PC-9 (cell line): ENCODE measurements at regions of chr9 and their contacts with region 1.

Region 1: GRCh38 chr9:88991066-88992034 is at the start of gene S1PR3:
- DNase-seq: peak in 1 of 2 experiments; percentile 76
- H3K4me3 ChIP-seq: peak within 1 kb of the TSS; percentile 86
- H3K27ac ChIP-seq: no peak within 1 kb of the TSS
- H3K4me1 ChIP-seq: peaks cover 28% of the 10 kb centered on the region
- H3K27me3 ChIP-seq: no peaks in the 10 kb centered on the region
- CTCF ChIP-seq: no peak; the same call in 1 of the 2 replicates
- total RNA-seq, gene S1PR3: 19.4 and 23.3 TPM in 2 replicates

Region 2: DNA sequence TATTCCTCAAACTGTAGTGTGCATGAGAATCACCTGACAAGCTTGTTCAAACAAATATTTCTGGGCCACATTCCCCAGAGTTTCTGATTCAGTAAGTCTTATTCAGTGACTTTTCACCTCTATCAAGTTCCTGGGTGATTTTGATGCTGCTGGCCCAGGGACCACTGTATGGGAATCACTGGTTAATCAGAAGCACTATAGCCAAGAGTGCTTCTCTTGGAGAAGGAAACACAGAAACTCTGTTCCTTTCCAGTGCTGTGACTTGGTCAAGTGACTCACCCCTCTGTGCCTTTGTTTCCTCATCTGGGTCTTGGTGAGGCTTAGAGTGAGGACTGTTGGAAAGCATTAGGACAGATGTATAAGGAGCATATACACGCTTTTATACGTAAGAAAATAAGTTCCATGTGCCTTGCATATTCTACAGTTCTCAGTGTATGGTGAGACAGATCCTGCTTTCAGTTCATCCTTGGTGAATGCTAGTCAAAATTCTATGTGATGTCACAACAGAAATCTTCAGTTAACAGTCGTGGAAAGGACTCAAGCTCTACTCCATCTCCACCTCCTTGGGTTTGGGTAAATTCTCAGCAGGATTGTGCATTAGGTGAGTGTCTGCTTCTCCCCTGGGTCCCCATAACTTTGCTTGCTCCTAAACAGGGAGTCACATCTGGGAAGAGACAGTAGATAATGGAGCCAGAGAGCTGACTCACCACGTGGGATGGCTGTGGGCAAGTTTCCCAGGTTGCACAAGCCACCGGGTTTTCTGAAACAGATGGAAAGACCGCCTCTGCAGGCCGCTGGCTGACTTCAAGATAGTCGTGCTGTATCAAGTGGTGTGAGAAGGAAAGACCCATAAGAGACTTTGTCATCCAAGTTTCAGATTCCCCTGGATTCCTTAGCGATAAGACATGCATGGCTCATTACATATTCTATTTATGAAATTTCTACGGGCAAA is 339.4 kb before region 1 on chr9:
- CTCF ChIA-PET with region 1: no interaction called
- POLR2A ChIA-PET with region 1: no interaction called
- intact Hi-C with region 1: loop called (anchors 5 kb)
- DNase-seq: peak in 1 of 2 experiments; percentile 83
- H3K4me3 ChIP-seq: no peak overlapping the region
- H3K27ac ChIP-seq: no peak overlapping the region
- H3K4me1 ChIP-seq: no peaks in the 10 kb centered on the region
- H3K27me3 ChIP-seq: no peaks in the 10 kb centered on the region
- CTCF ChIP-seq: no peak

Region 3: DNA sequence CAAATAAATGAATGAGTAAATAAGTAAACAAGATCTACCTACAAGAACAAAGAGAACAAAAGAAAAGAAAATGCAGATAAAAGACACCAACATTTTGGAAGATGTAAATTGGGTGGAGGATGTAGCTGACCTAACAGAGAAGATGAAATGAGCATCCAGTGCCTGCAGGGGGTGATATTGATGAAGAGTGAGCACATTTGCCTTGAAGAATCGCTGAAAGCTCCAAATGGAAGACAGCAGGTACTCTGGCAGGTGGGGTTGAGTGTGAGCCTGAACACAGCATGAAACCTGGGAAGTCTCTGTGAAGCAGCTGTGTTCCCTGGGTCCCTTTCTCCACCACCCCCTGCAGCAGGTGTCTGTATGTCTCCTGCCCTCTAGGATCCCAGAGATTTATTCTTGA is 330.7 kb before region 1 on chr9:
- CTCF ChIA-PET with region 1: interaction called, 22 read pairs
- POLR2A ChIA-PET with region 1: no interaction called
- intact Hi-C with region 1: no loop called
- DNase-seq: peak in 1 of 2 experiments; percentile 4
- H3K4me3 ChIP-seq: no peak overlapping the region
- H3K27ac ChIP-seq: no peak overlapping the region
- H3K4me1 ChIP-seq: no peaks in the 10 kb centered on the region
- H3K27me3 ChIP-seq: no peaks in the 10 kb centered on the region
- CTCF ChIP-seq: peak; percentile 55

Region 4: GRCh38 chr9:88880205-88880604 is 111.1 kb before region 1 on chr9:
- CTCF ChIA-PET with region 1: no interaction called
- POLR2A ChIA-PET with region 1: interaction called, 7 read pairs
- intact Hi-C with region 1: loop called (anchors 1 kb)
- DNase-seq: peak; percentile 77 to 85
- H3K4me3 ChIP-seq: no peak overlapping the region
- H3K27ac ChIP-seq: no peak overlapping the region
- H3K4me1 ChIP-seq: peaks cover 6% of the 10 kb centered on the region; the same call in 1 of the 2 replicates
- H3K27me3 ChIP-seq: no peaks in the 10 kb centered on the region
- CTCF ChIP-seq: no peak

Region 5: GRCh38 chr9:88891040-88891439 is 100.3 kb before region 1 on chr9:
- CTCF ChIA-PET with region 1: no interaction called
- POLR2A ChIA-PET with region 1: no interaction called
- intact Hi-C with region 1: no loop called
- DNase-seq: no peak
- H3K4me3 ChIP-seq: no peak overlapping the region
- H3K27ac ChIP-seq: no peak overlapping the region
- H3K4me1 ChIP-seq: peaks cover 17% of the 10 kb centered on the region
- H3K27me3 ChIP-seq: no peaks in the 10 kb centered on the region
- CTCF ChIP-seq: no peak

Region 6: GRCh38 chr9:88942411-88942810 is 48.9 kb before region 1 on chr9:
- CTCF ChIA-PET with region 1: no interaction called
- POLR2A ChIA-PET with region 1: no interaction called
- intact Hi-C with region 1: loop called (anchors 5 kb)
- DNase-seq: peak in 1 of 2 experiments; percentile 72
- H3K4me3 ChIP-seq: no peak overlapping the region
- H3K27ac ChIP-seq: peak overlapping the region; percentile 72
- H3K4me1 ChIP-seq: peaks cover 77% of the 10 kb centered on the region
- H3K27me3 ChIP-seq: no peaks in the 10 kb centered on the region
- CTCF ChIP-seq: no peak

Region 7: GRCh38 chr9:89021154-89021803 is 29.9 kb after region 1 on chr9:
- CTCF ChIA-PET with region 1: no interaction called
- POLR2A ChIA-PET with region 1: no interaction called
- intact Hi-C with region 1: no loop called
- DNase-seq: peak; percentile 82 to 85
- H3K4me3 ChIP-seq: peak overlapping the region; percentile 12; the same call in 1 of the 2 replicates
- H3K27ac ChIP-seq: peak overlapping the region; percentile 70
- H3K4me1 ChIP-seq: peaks cover 42% of the 10 kb centered on the region
- H3K27me3 ChIP-seq: no peaks in the 10 kb centered on the region
- CTCF ChIP-seq: no peak

Region 8: DNA sequence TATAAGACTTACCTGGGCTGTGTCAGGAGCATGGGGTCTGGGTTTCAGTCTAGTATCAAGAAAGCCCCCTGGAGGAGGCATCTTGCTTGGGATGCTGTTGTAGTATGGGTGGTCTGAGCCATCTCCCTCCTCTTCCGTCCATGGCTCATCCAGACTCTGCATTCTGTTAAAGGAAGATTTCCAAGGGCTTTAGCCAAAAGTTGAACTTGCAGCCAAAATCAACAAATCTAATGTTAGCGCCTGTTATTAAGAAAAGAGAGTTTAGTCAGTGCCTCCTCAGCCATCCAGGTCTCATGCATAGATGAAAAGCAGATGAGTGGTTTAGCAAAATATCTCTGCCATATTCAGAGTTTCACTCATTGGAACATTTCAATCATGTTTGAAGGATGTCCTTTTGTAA is 55.5 kb after region 1 on chr9:
- CTCF ChIA-PET with region 1: no interaction called
- POLR2A ChIA-PET with region 1: no interaction called
- intact Hi-C with region 1: no loop called
- DNase-seq: no peak
- H3K4me3 ChIP-seq: no peak overlapping the region
- H3K27ac ChIP-seq: no peak overlapping the region
- H3K4me1 ChIP-seq: no peaks in the 10 kb centered on the region
- H3K27me3 ChIP-seq: no peaks in the 10 kb centered on the region
- CTCF ChIP-seq: no peak

Region 9: GRCh38 chr9:89171231-89171630 is 179.9 kb after region 1 on chr9:
- CTCF ChIA-PET with region 1: no interaction called
- POLR2A ChIA-PET with region 1: interaction called, 12 read pairs
- intact Hi-C with region 1: no loop called
- DNase-seq: no peak
- H3K4me3 ChIP-seq: no peak overlapping the region
- H3K27ac ChIP-seq: no peak overlapping the region
- H3K4me1 ChIP-seq: peaks cover 8% of the 10 kb centered on the region
- H3K27me3 ChIP-seq: no peaks in the 10 kb centered on the region
- CTCF ChIP-seq: no peak

Region 10: DNA sequence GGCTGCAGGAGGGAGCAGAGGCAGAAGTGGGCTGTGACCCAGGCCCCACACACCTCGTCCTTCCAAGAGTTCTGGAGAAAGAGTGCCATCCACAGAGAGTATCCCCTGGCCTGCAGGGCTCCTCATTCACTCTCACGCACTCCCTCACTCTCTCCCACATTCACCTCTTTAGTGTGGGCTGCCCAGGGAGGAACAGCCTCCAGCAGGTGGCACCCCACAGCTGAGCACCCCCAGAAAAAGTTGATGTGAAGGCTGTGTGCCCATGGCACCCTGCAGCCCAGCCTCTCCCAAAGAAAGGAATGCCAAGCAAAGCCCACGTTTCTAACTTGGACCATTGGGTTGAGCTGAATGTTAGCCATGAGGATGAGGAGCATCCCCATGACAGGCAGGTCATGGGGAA is 191.8 kb after region 1 on chr9:
- CTCF ChIA-PET with region 1: no interaction called
- POLR2A ChIA-PET with region 1: no interaction called
- intact Hi-C with region 1: no loop called
- DNase-seq: no peak
- H3K4me3 ChIP-seq: no peak overlapping the region
- H3K27ac ChIP-seq: no peak overlapping the region
- H3K4me1 ChIP-seq: peaks cover 23% of the 10 kb centered on the region
- H3K27me3 ChIP-seq: no peaks in the 10 kb centered on the region
- CTCF ChIP-seq: no peak